ENCODE measurements at regions of chr14 and their contacts with region 1.

Region 1: DNA sequence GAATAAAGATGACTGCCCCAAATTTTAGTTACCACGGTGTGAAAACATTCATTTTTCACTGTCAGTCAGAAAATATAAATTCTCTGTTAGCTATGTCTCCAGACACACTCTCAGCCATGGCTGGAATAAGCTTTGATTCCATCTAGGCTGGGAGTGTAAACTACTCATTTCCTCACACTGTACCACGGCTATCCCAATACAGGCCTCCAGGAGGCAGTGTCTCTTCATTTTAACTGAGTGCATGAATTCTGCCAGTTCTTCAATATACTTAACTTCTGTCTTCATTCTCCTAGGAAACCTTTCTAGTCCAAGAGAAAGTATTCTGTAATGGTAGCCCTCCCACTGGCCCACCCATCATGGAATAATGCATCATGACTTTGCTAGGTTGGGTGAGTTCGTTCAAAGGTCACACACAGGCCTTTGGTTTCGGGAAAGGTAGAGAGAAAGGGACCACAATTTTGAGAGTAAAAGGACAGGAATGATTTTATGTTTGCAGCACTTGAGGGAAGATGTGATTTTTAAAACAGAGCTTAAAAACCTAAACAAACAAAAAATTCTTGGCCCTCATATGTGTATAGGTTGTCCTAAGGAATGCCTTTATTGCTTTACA is 381.1 kb downstream of the SEC23A start:
- DNase-seq: peak; percentile 16
- ATAC-seq: no peak
- H3K4me3 ChIP-seq: no peak overlapping the region
- H3K4me3 Mint-ChIP-seq: no peak overlapping the region
- H3K27ac ChIP-seq: no peak overlapping the region
- H3K27ac Mint-ChIP-seq: no peak overlapping the region
- H3K4me1 ChIP-seq: no peaks in the 10 kb centered on the region
- H3K4me1 Mint-ChIP-seq: peaks cover 3% of the 10 kb centered on the region
- H3K27me3 ChIP-seq: no peaks in the 10 kb centered on the region
- H3K27me3 Mint-ChIP-seq: no peaks in the 10 kb centered on the region
- CTCF ChIP-seq: peak; percentile 55

Region 2: GRCh38 chr14:38420048-38420447 is 301.9 kb before region 1 on chr14:
- CTCF ChIA-PET with region 1: no interaction called
- POLR2A ChIA-PET with region 1: no interaction called
- intact Hi-C with region 1: no loop called
- DNase-seq: no peak
- ATAC-seq: no peak
- H3K4me3 ChIP-seq: no peak overlapping the region
- H3K4me3 Mint-ChIP-seq: no peak overlapping the region
- H3K27ac ChIP-seq: no peak overlapping the region
- H3K27ac Mint-ChIP-seq: no peak overlapping the region
- H3K4me1 ChIP-seq: no peaks in the 10 kb centered on the region
- H3K4me1 Mint-ChIP-seq: no peaks in the 10 kb centered on the region
- H3K27me3 ChIP-seq: no peaks in the 10 kb centered on the region
- H3K27me3 Mint-ChIP-seq: no peaks in the 10 kb centered on the region
- CTCF ChIP-seq: no peak

Region 3: DNA sequence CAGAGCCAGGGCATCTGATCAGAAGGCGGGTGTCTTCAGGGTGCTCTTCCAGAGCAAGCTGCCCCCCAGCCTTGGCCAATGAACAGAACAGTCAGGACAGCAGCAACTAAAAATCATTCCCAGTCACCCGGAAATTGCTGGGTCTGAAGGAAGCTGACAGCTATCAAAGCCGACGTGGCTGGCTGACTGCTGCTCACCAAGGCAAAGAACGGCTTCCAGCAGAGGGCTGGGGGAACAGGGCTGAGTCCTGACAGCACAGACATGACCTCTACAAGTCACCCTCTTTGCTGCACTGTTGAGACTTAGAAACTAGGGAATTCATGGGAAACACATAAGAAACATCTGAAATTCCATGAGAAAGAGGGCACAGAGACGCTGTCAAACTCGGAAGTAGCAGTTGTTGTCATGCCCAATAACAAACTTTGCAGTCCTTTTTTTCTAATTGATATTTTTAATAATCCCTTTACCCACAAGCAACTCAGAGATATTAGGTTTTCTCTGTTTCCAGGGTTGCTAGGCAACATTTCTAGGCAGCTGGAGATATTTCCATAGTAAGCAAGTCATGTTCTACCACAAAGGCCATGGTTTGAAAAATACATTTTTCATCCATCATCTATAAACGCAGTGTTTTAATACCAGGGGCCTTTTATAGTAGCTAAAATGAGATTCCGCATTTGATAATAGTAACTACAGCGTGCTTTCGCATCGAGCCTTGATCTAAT is 15.9 kb after region 1 on chr14:
- CTCF ChIA-PET with region 1: no interaction called
- POLR2A ChIA-PET with region 1: no interaction called
- intact Hi-C with region 1: no loop called
- DNase-seq: no peak
- ATAC-seq: no peak
- H3K4me3 ChIP-seq: no peak overlapping the region
- H3K4me3 Mint-ChIP-seq: no peak overlapping the region
- H3K27ac ChIP-seq: no peak overlapping the region
- H3K27ac Mint-ChIP-seq: no peak overlapping the region
- H3K4me1 ChIP-seq: no peaks in the 10 kb centered on the region
- H3K4me1 Mint-ChIP-seq: no peaks in the 10 kb centered on the region
- H3K27me3 ChIP-seq: no peaks in the 10 kb centered on the region
- H3K27me3 Mint-ChIP-seq: no peaks in the 10 kb centered on the region
- CTCF ChIP-seq: no peak

Region 4: DNA sequence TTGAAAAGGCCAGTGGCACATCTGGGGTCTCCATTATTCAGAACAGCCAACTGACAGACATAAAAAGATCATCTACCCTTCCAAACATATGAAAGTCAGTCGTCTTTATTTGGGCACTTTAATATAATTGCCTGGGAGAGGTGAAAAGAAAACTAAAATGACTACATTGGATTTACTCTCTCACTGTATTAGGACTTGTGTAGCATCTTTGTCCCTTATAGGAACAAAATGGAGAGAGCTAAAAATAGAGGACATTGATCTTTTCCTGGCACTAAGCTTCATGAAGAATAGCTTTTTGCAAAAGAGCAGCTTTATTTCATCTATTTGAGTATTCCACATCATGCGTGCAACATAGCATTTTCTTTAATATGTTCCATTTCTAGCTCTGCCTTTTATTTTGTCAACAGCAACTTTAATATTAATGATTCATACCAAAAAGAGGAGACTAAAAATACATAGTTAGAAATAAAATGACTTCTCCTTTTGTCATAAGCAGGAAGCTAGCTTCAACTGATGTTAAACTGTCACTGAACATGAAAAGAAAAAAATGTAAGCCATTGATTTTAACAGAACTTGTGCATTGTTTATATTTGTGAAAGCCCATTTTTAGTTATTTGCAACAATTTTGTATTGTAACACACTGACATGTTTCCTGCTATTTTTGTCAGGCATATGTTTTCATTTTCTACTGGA is 126.5 kb after region 1 on chr14:
- CTCF ChIA-PET with region 1: no interaction called
- POLR2A ChIA-PET with region 1: no interaction called
- intact Hi-C with region 1: no loop called
- DNase-seq: no peak
- ATAC-seq: no peak
- H3K4me3 ChIP-seq: no peak overlapping the region
- H3K4me3 Mint-ChIP-seq: no peak overlapping the region
- H3K27ac ChIP-seq: no peak overlapping the region
- H3K27ac Mint-ChIP-seq: no peak overlapping the region
- H3K4me1 ChIP-seq: no peaks in the 10 kb centered on the region
- H3K4me1 Mint-ChIP-seq: no peaks in the 10 kb centered on the region
- H3K27me3 ChIP-seq: no peaks in the 10 kb centered on the region
- H3K27me3 Mint-ChIP-seq: no peaks in the 10 kb centered on the region
- CTCF ChIP-seq: no peak

Region 5: DNA sequence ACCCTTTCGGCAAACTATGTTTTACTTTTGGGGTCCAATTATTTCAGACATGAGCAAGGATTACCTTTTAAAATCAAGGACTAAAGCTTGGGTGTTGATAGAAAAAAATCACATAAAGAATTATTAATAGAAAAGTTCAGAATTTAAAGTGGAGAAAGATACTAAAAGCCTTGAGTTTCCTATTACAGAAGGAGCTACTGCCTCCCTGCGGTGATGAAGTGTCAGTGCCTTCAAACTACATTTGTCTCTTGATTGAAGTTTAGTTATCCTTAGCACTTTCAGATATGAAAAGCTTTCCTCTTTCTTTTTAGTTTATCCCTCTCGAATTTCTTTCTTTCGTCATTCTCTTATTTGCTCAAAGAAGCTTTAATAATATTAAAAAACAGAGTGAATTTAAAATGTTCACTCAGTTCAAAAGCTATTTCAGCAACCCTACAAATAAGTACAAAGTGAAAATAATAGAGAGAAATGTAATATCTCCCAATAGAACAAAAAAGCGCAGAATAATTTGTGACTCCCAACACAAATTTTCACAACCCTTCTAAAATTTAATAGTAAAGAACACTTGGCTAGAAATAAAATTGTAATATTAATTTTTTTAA is 293.5 kb after region 1 on chr14:
- CTCF ChIA-PET with region 1: interaction called, 4 read pairs
- POLR2A ChIA-PET with region 1: no interaction called
- intact Hi-C with region 1: loop called (anchors 10 kb)
- DNase-seq: peak; percentile 22
- ATAC-seq: no peak
- H3K4me3 ChIP-seq: no peak overlapping the region
- H3K4me3 Mint-ChIP-seq: no peak overlapping the region
- H3K27ac ChIP-seq: no peak overlapping the region
- H3K27ac Mint-ChIP-seq: no peak overlapping the region
- H3K4me1 ChIP-seq: no peaks in the 10 kb centered on the region
- H3K4me1 Mint-ChIP-seq: no peaks in the 10 kb centered on the region
- H3K27me3 ChIP-seq: no peaks in the 10 kb centered on the region
- H3K27me3 Mint-ChIP-seq: no peaks in the 10 kb centered on the region
- CTCF ChIP-seq: peak; percentile 75